Activated CD8-positive, alpha-beta T cell treated with anti-CD3 and anti-CD28 coated beads for 36 hours (primary cell): ENCODE measurements at regions of chr18 and their contacts with region 1.

Region 1: DNA sequence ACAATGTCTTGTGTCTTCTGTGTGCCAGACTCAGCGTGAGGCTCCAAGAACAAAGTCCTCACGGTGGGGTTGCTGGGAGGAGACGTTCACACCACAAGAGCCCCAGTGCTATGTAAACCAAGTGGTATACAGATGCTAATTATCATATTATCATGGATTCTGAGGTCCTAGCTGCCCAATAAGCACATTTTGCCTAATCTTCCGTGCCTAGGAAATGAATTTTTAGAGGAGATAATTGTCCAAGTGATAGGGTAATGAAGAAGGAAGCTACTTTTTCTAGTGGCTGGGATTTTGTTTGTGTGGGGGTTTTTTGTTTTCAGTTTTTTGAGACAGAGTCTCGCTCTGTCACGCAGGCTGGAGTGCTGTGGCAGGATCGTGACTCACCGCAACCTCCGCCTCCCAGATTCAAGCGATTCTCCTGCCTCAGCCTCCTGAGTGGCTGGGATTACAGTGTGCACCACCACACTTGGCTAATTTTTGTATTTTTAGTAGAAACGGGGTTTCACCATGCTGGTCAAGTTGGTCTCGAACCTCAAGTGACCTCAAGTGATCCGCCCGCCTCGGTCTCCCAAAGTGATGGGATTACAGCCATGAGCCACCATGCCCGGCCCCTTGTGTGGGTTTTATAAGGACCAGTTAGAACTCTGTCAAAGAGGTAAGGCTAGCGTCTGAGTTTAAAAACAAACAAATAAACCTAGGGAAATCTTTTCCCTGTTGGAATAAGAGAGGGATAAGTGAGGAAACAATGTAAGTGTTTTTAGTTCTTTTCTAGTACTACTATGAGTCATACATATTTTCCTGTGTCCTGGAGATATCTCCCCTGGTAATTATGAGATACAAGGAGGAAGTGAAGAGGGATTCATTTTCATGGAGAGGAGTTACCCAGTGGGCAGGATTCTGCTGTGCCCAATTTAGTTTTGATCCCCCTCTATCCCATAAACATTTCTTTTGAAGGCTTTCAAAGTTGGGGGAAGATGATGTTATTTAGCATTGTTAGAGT is 9.5 kb upstream of the SMAD7 start:
- DNase-seq: no peak
- ATAC-seq: no peak
- H3K4me3 Mint-ChIP-seq: no peak overlapping the region
- H3K27ac Mint-ChIP-seq: no peak overlapping the region
- H3K4me1 Mint-ChIP-seq: peaks cover 21% of the 10 kb centered on the region
- H3K27me3 Mint-ChIP-seq: peaks cover 4% of the 10 kb centered on the region
- CTCF ChIP-seq: no peak

Region 2: DNA sequence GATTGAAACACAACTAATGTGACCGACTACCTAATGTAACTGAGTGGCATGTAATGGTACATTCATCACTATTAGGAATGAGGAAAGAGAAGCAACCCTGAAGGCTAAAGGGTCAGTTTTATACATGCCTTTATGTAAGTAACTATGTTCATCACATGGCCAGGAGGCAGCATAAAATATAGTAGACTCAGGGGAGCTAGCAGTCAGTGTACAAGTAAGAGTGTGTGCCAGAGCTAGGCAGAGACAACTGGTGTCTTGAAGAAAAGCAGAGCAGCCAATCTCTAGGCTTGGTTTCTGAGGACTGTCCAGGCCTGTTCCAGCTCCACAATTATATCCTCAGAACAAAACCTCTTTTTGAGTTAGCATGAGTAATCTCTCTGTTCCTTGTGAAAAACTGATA is 1047.9 kb before region 1 on chr18:
- CTCF ChIA-PET with region 1: no interaction called
- POLR2A ChIA-PET with region 1: no interaction called
- intact Hi-C with region 1: loop called (anchors 10 kb)
- DNase-seq: peak; percentile 26
- ATAC-seq: peak; percentile 68
- H3K4me3 Mint-ChIP-seq: peak overlapping the region; percentile 18
- H3K27ac Mint-ChIP-seq: peak overlapping the region; percentile 90
- H3K4me1 Mint-ChIP-seq: peaks cover 89% of the 10 kb centered on the region
- H3K27me3 Mint-ChIP-seq: no peaks in the 10 kb centered on the region
- CTCF ChIP-seq: no peak

Region 3: GRCh38 chr18:48913201-48913600 is 47.0 kb before region 1 on chr18:
- CTCF ChIA-PET with region 1: no interaction called
- POLR2A ChIA-PET with region 1: no interaction called
- intact Hi-C with region 1: no loop called
- DNase-seq: peak; percentile 67
- ATAC-seq: peak; percentile 77
- H3K4me3 Mint-ChIP-seq: no peak overlapping the region
- H3K27ac Mint-ChIP-seq: no peak overlapping the region
- H3K4me1 Mint-ChIP-seq: peaks cover 23% of the 10 kb centered on the region
- H3K27me3 Mint-ChIP-seq: no peaks in the 10 kb centered on the region
- CTCF ChIP-seq: peak; percentile 43